ENCODE measurements at regions of chr19 and their contacts with region 1.

Region 1: DNA sequence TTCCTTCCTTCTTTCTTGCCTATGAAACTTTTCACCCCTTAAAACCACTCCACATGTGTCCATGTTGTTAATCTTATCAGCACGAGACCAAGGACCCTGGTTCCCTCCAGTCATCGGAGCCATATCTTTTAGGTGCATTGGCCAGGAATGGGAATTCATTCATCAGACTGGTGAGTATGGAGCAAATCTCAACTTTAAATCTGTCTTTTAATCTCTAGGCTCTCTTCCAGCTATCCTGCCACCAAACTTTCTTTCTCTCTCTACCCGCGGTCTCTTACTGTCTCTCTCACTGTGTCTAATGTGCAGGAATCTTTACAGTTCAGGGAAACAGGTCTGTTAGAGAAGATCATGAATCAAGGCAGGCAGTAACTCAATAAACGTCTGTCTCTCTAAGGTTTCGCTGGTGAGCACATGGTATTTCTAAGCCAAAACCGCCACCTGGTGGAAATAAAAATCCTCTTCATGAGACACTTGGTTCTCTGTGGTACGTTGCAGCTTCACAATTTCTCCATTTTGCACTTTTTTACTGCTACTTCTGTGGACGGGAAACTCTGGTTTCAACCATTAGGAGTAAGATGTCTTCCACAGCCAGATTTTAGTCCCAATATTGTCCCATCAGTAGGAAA is 16.1 kb downstream of the LGALS16 start:
- DNase-seq: peak; percentile 65
- H3K4me3 Mint-ChIP-seq: no peak overlapping the region
- H3K27ac Mint-ChIP-seq: no peak overlapping the region
- H3K4me1 Mint-ChIP-seq: peaks cover 35% of the 10 kb centered on the region
- H3K27me3 Mint-ChIP-seq: peaks cover 4% of the 10 kb centered on the region

Region 2: GRCh38 chr19:39445265-39446111 is 226.4 kb before region 1 on chr19 and contains the start of gene SUPT5H:
- CTCF ChIA-PET with region 1: interaction called, 15 read pairs
- DNase-seq: peak; percentile 99
- H3K4me3 Mint-ChIP-seq: peak within 1 kb of the TSS; percentile 86
- H3K27ac Mint-ChIP-seq: peak within 1 kb of the TSS; percentile 93
- H3K4me1 Mint-ChIP-seq: peaks cover 54% of the 10 kb centered on the region
- H3K27me3 Mint-ChIP-seq: no peaks in the 10 kb centered on the region

Region 3: GRCh38 chr19:39546599-39546998 is 125.3 kb before region 1 on chr19:
- CTCF ChIA-PET with region 1: interaction called, 88 read pairs
- DNase-seq: no peak
- H3K4me3 Mint-ChIP-seq: no peak overlapping the region
- H3K27ac Mint-ChIP-seq: no peak overlapping the region
- H3K4me1 Mint-ChIP-seq: peaks cover 53% of the 10 kb centered on the region
- H3K27me3 Mint-ChIP-seq: no peaks in the 10 kb centered on the region

Region 4: GRCh38 chr19:39554701-39555311 is 117.0 kb before region 1 on chr19:
- CTCF ChIA-PET with region 1: interaction called, 88 read pairs
- DNase-seq: no peak
- H3K4me3 Mint-ChIP-seq: no peak overlapping the region
- H3K27ac Mint-ChIP-seq: no peak overlapping the region
- H3K4me1 Mint-ChIP-seq: peaks cover 52% of the 10 kb centered on the region
- H3K27me3 Mint-ChIP-seq: no peaks in the 10 kb centered on the region

Region 5: GRCh38 chr19:39696418-39696817 is 24.6 kb after region 1 on chr19:
- CTCF ChIA-PET with region 1: no interaction called
- DNase-seq: no peak
- H3K4me3 Mint-ChIP-seq: no peak overlapping the region
- H3K27ac Mint-ChIP-seq: no peak overlapping the region
- H3K4me1 Mint-ChIP-seq: no peaks in the 10 kb centered on the region
- H3K27me3 Mint-ChIP-seq: peaks cover 11% of the 10 kb centered on the region

Region 6: GRCh38 chr19:39765091-39766076 is 93.5 kb after region 1 on chr19:
- CTCF ChIA-PET with region 1: interaction called, 15 read pairs
- DNase-seq: peak; percentile 48
- H3K4me3 Mint-ChIP-seq: no peak overlapping the region
- H3K27ac Mint-ChIP-seq: no peak overlapping the region
- H3K4me1 Mint-ChIP-seq: peaks cover 6% of the 10 kb centered on the region
- H3K27me3 Mint-ChIP-seq: peaks cover 11% of the 10 kb centered on the region

Region 7: GRCh38 chr19:39792999-39793546 is 121.2 kb after region 1 on chr19:
- CTCF ChIA-PET with region 1: interaction called, 21 read pairs
- DNase-seq: peak; percentile 81
- H3K4me3 Mint-ChIP-seq: peak overlapping the region; percentile 72
- H3K27ac Mint-ChIP-seq: no peak overlapping the region
- H3K4me1 Mint-ChIP-seq: peaks cover 7% of the 10 kb centered on the region
- H3K27me3 Mint-ChIP-seq: peaks cover 16% of the 10 kb centered on the region

Region 8: DNA sequence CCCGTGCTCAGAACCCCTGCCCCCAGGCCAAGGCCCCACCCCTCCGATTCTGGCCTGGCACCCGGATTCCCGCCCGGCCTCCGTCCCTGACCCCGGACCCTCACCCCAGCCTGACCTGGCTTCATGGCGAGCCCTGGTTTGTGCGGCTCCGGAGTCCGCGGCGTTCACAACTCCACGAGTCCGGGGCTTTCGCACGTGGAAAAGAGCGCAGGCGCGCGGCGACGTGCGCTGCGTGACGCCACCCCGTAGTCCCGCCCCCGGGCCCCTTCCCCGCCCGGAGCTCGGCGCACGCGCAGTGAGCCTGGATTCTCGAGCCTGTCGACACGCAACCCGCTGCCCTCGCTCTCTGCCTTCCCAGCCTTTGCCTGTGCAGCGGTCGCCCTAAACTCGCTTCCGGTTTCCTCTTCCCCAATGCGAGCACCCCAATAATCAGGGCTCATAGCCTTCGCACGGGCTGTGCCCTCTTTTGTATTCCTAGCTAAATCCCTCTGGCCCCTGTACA is 174.4 kb after region 1 on chr19 and contains the start of gene FBL:
- CTCF ChIA-PET with region 1: interaction called, 80 read pairs
- DNase-seq: peak; percentile 98
- H3K4me3 Mint-ChIP-seq: peak within 1 kb of the TSS; percentile 92
- H3K27ac Mint-ChIP-seq: peak within 1 kb of the TSS; percentile 96
- H3K4me1 Mint-ChIP-seq: peaks cover 49% of the 10 kb centered on the region
- H3K27me3 Mint-ChIP-seq: no peaks in the 10 kb centered on the region

Region 9: GRCh38 chr19:39941615-39942365 is 269.9 kb after region 1 on chr19:
- CTCF ChIA-PET with region 1: no interaction called
- DNase-seq: peak; percentile 65
- H3K4me3 Mint-ChIP-seq: peak overlapping the region; percentile 38
- H3K27ac Mint-ChIP-seq: peak overlapping the region; percentile 91
- H3K4me1 Mint-ChIP-seq: peaks cover 70% of the 10 kb centered on the region
- H3K27me3 Mint-ChIP-seq: no peaks in the 10 kb centered on the region

Measured in activated naive CD4-positive, alpha-beta T cell treated with anti-CD3 and anti-CD28 coated beads, Interleukin-2, amount 10 ng/mL, durations not matched to agents 7 days and 5 days (primary cell).